Endothelial cell of umbilical vein (primary cell): ENCODE measurements at regions of chr6 and their contacts with region 1.

Region 1: GRCh38 chr6:32127717-32128592 is at the start of gene ATF6B:
- DNase-seq: peak; percentile 99
- H3K4me3 ChIP-seq: peak within 1 kb of the TSS; percentile 71 to 99 (median 84)
- H3K27ac ChIP-seq: peak within 1 kb of the TSS; percentile 83
- H3K4me1 ChIP-seq: peaks cover 20% of the 10 kb centered on the region
- H3K27me3 ChIP-seq: no peaks in the 10 kb centered on the region
- CTCF ChIP-seq: no peak
- POLR2A ChIP-seq: no peak
- total RNA-seq, gene ATF6B: 102 and 106 TPM in 2 replicates

Region 2: DNA sequence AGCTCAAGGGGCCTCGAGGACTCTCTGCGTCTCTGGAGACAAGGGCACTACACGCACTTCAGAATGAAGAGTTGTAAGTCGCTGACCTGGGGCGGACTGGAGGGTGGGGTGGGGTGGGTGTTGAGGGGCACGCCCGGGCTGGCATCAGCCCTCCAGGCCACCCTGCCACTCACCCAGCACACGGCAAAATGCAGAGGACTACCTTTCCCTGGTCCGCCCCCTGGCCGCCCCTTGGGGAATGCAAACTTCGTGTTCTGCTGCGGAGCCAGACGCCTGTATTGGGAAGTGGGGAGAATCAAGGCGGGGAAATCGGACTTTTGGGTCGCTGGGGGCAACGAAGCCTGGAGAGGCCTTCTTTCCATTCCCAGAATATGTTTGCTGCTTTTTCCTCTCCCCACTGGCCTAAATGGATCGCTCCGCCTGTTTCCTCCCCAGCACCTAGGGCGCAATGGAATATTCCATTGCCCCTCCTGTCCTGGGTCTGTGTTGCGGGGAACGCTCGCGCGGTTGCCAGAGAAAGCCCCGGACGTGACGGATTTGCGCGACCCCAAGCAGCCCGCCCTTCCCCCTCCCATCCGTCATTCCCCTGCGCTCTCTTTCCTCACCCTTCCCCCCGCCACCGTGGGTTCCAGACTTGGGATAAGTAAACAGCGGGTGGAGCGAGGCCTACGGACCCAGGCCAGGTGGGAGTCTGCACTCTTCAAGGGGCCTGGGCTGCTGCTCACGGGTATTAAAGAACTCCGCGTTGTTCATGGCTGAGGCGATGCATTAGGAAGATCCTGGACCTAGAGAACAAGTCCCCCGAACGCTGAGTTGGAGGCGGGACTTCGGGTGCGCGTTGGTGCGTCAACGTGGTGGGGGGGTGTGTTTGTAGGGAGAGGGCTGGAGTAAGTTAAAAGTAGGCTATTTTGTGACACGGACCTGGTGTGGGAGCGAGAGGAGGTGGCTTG is 25.9 kb after region 1 on chr6 and contains the start of gene PPT2:
- CTCF ChIA-PET with region 1: interaction called, 6 read pairs
- POLR2A ChIA-PET with region 1: interaction called, 5 read pairs
- dilution Hi-C with region 1: no loop called
- intact Hi-C with region 1: loop called (anchors 1 kb)
- DNase-seq: peak; percentile 94
- H3K4me3 ChIP-seq: peak within 1 kb of the TSS; percentile 41 to 71 (median 60)
- H3K27ac ChIP-seq: peak within 1 kb of the TSS; percentile 51
- H3K4me1 ChIP-seq: peaks cover 24% of the 10 kb centered on the region
- H3K27me3 ChIP-seq: peaks cover 4 to 5% of the 10 kb centered on the region in 2 experiments
- CTCF ChIP-seq: peak in 1 of 2 donors; percentile 16
- POLR2A ChIP-seq: peak; percentile 61
- total RNA-seq, gene PPT2: 27.2 and 27.6 TPM in 2 replicates

Region 3: DNA sequence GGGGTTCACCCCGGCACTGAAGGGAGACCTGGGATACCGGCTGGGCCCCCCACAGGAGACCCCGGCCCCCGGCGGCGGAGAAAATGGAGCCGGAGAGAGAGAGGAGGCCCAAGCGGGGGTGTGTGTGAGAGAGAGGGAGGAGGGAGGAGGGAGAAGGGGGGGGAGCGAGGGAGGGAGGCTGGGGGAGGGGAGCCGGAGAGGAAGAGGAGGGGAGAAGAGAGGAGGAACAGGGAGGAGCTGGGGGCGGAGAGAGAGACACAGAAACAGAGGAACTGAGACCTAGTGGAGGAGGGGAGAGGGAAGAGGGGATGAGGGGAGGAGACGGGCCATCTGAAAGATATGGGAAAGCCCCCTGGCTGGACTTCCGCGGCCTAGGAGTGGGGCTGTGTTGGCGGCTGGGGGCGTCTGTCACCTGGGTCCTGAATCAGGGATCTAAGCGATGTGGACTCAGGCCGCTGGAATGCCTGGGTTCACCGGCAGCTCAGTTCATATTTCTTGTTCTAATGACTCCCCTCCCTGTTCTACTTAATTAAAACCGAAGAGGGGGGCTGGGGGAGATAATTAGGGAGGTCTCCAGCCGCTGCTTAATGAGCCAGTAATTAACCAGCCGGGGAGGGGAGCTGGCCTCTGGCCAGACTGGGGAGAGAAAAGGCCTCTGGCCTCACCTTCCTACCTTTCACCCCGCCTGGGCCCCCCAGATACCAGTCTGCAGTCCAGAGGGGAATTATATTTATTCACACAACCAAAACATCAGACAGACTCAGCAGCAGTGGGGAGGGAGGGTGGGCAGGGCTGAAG is 62.3 kb after region 1 on chr6 and contains the start of gene PBX2:
- CTCF ChIA-PET with region 1: interaction called, 17 read pairs
- POLR2A ChIA-PET with region 1: interaction called, 5 read pairs
- dilution Hi-C with region 1: no loop called
- intact Hi-C with region 1: loop called (anchors 1 kb)
- DNase-seq: peak; percentile 93
- H3K4me3 ChIP-seq: peak within 1 kb of the TSS; percentile 32 to 83 (median 73)
- H3K27ac ChIP-seq: peak within 1 kb of the TSS; percentile 83
- H3K4me1 ChIP-seq: peaks cover 47% of the 10 kb centered on the region
- H3K27me3 ChIP-seq: no peaks in the 10 kb centered on the region
- CTCF ChIP-seq: no peak
- POLR2A ChIP-seq: peak; percentile 53
- total RNA-seq, gene PBX2: 95.9 and 100 TPM in 2 replicates